GM12878 (cell line): ENCODE measurements at regions of chr5 and their contacts with region 1.

Region 1: GRCh38 chr5:36397901-36398536 is 96.3 kb upstream of the RANBP3L start:
- DNase-seq: no peak
- ATAC-seq: no peak
- H3K4me3 ChIP-seq: no peak overlapping the region
- H3K27ac ChIP-seq: no peak overlapping the region
- H3K4me1 ChIP-seq: no peaks in the 10 kb centered on the region
- H3K27me3 ChIP-seq: no peaks in the 10 kb centered on the region; a peak in 1 of 4 replicates
- CTCF ChIP-seq: peak in 2 of 3 experiments; percentile 12 to 26; a peak in 3 of 6 replicates
- EP300 ChIP-seq: no peak
- POLR2A ChIP-seq: no peak
- RAD21 ChIP-seq: peak; percentile 53

Region 2: GRCh38 chr5:35478856-35479682 is 919.0 kb before region 1 on chr5:
- CTCF ChIA-PET with region 1: no interaction called
- POLR2A ChIA-PET with region 1: no interaction called
- RAD21 ChIA-PET with region 1: no interaction called
- SMC1A ChIA-PET with region 1: no interaction called
- in situ Hi-C with region 1: no loop called
- intact Hi-C with region 1: no loop called
- DNase-seq: no peak
- ATAC-seq: peak; percentile 66
- H3K4me3 ChIP-seq: no peak overlapping the region
- H3K27ac ChIP-seq: no peak overlapping the region; the same call in 1 of the 2 replicates
- H3K4me1 ChIP-seq: no peaks in the 10 kb centered on the region
- H3K27me3 ChIP-seq: no peaks in the 10 kb centered on the region
- CTCF ChIP-seq: no peak
- EP300 ChIP-seq: no peak
- POLR2A ChIP-seq: no peak
- RAD21 ChIP-seq: no peak

Region 3: DNA sequence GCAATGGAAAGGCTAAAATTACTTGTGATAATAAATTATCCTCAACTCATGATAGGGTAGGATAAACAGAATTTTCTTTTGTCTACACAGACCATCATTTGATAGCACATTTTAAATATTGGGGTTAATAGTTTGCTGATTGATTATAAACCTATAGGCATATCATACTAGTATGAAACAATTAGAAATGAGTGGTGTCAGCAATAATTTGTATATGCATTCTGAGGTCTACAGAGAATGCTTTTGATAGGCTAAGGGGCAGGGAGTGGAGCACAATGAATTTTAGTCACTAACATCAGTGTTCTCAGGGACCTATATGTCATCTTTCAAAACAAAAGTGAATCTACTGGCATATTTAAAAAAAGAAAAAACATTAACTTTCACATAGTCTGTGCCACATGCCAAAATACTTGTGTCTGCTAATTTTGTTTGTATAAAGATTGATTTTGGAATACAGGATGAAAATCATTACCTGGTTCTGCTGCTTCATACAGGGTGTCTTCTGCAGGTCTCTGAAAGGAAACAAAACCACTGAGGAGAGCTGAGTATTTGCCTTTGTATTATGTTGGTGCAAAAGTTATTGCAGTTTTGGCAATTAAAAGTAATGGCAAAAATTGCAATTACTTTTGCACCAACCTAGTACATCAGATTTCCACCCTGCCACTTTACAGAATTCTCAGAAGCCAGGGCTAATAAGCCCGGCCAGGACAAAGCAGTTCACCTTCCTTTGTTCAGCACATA is 128.4 kb before region 1 on chr5:
- CTCF ChIA-PET with region 1: no interaction called
- POLR2A ChIA-PET with region 1: no interaction called
- RAD21 ChIA-PET with region 1: no interaction called
- SMC1A ChIA-PET with region 1: interaction called, 5 read pairs
- in situ Hi-C with region 1: no loop called
- intact Hi-C with region 1: loop called (anchors 5 kb)
- DNase-seq: no peak
- ATAC-seq: no peak
- H3K4me3 ChIP-seq: no peak overlapping the region
- H3K27ac ChIP-seq: no peak overlapping the region
- H3K4me1 ChIP-seq: no peaks in the 10 kb centered on the region
- H3K27me3 ChIP-seq: no peaks in the 10 kb centered on the region
- CTCF ChIP-seq: no peak
- EP300 ChIP-seq: no peak
- POLR2A ChIP-seq: no peak
- RAD21 ChIP-seq: no peak